ENCODE measurements at regions of chr20 and their contacts with region 1.

Region 1: DNA sequence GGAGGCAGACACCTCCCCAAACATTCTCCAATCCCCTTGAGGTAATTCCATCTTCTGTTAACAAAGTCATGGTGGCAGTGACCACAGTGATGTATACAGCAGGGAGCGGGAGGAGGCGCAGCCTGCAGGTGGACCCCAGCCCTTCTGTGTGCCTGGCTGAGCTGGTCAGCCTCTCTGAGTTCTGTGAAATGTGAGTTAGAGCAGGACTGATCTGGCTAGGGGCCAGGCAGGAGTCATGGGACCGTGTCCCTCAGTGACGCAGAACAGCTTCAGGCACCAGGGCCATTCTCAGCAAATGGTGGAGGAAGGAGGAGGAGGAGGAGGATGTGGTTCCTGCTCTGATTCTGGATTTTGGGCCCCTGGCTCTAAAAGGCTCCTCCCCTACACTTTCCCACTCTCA is 6.9 kb downstream of the PHACTR3 start:
- DNase-seq: no peak
- H3K4me3 ChIP-seq: no peak overlapping the region
- H3K4me3 Mint-ChIP-seq: no peak overlapping the region
- H3K27ac ChIP-seq: no peak overlapping the region
- H3K27ac Mint-ChIP-seq: no peak overlapping the region
- H3K4me1 ChIP-seq: no peaks in the 10 kb centered on the region
- H3K4me1 Mint-ChIP-seq: no peaks in the 10 kb centered on the region
- H3K27me3 ChIP-seq: no peaks in the 10 kb centered on the region
- H3K27me3 Mint-ChIP-seq: peaks cover 17 to 28% of the 10 kb centered on the region in 2 donors

Region 2: DNA sequence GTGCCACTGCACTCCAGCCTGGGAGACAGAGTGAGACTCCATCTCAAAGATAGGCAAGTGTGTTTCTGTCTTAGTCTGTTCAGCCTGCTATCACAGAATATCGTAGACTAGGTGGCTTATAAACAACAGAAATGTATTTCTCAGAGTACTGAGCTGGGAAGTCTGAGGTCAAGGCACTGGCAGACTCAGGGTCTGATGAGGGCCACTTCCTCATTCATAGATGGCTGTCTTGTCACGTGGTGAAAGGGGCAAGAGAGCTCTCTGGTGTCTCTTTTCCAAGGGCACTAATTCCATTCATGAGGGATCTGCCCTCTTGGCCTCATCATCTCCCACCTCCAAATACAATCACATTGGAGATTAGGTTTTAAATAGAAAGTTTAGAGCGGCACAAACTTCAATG is 102.5 kb before region 1 on chr20:
- CTCF ChIA-PET with region 1: no interaction called
- POLR2A ChIA-PET with region 1: no interaction called
- intact Hi-C with region 1: no loop called
- DNase-seq: no peak
- H3K4me3 ChIP-seq: no peak overlapping the region
- H3K4me3 Mint-ChIP-seq: no peak overlapping the region
- H3K27ac ChIP-seq: no peak overlapping the region
- H3K27ac Mint-ChIP-seq: no peak overlapping the region
- H3K4me1 ChIP-seq: no peaks in the 10 kb centered on the region
- H3K4me1 Mint-ChIP-seq: no peaks in the 10 kb centered on the region
- H3K27me3 ChIP-seq: no peaks in the 10 kb centered on the region
- H3K27me3 Mint-ChIP-seq: peaks cover 5 to 19% of the 10 kb centered on the region in 2 donors

Region 3: DNA sequence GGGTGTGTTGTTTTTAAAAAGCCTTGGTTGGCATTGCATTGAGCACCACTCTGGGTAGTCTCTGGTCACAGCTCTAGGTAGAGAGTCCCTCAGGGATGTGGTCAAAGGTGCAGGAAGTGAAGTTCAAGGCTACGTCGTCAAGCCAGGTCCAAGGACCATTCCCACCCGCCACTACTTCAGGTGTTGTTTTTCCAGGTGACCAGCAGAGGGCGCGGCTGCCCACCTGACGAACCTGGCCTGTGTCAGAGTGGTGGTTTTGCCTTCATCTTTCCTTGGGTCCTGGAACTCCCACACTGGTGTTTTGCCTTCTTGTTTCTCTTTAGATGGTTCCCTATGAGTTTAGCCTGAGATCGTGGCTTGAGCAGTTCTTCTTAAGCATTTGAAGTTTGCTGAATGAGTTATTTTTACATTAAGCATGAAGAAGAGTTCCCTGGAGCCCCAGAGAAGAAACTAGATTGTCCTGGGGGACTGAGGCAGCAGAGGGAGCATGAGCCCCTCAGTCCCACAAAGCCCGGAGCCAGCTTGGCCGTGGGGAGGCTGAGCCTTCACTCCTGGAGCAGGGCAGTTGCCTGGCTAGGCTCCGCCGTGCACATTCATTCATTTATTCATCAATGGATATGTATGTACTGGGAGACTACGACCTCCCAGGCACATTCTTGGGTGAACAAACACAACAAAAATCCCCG is 12.5 kb before region 1 on chr20:
- CTCF ChIA-PET with region 1: interaction called, 19 read pairs
- POLR2A ChIA-PET with region 1: no interaction called
- intact Hi-C with region 1: no loop called
- DNase-seq: peak in 1 of 5 donors; percentile 3
- H3K4me3 ChIP-seq: no peak overlapping the region
- H3K4me3 Mint-ChIP-seq: no peak overlapping the region
- H3K27ac ChIP-seq: no peak overlapping the region
- H3K27ac Mint-ChIP-seq: no peak overlapping the region
- H3K4me1 ChIP-seq: no peaks in the 10 kb centered on the region
- H3K4me1 Mint-ChIP-seq: peaks cover 0 to 4% (median 1%) of the 10 kb centered on the region in 4 donors
- H3K27me3 ChIP-seq: peaks cover 4% of the 10 kb centered on the region
- H3K27me3 Mint-ChIP-seq: peaks cover 37 to 45% of the 10 kb centered on the region in 2 donors